Panc1 (cell line): ENCODE measurements at regions of chr2 and their contacts with region 1.

Region 1: GRCh38 chr2:102703748-102704147 is 58.1 kb upstream of the TMEM182 start:
- DNase-seq: peak; percentile 39
- ATAC-seq: peak; percentile 94
- H3K4me3 ChIP-seq: no peak overlapping the region
- H3K27ac ChIP-seq: no peak overlapping the region
- H3K4me1 ChIP-seq: peaks cover 3% of the 10 kb centered on the region
- H3K27me3 ChIP-seq: no peaks in the 10 kb centered on the region
- CTCF ChIP-seq: peak; percentile 65; the same call in 1 of the 2 replicates

Region 2: GRCh38 chr2:102473020-102473419 is 230.7 kb before region 1 on chr2 and contains the start of gene SLC9A4:
- CTCF ChIA-PET with region 1: interaction called, 4 read pairs
- POLR2A ChIA-PET with region 1: no interaction called
- in situ Hi-C with region 1: no loop called
- intact Hi-C with region 1: loop called (anchors 1 kb)
- DNase-seq: peak; percentile 41
- ATAC-seq: peak; percentile 70; the same call in 1 of the 2 replicates
- H3K4me3 ChIP-seq: no peak within 1 kb of the TSS
- H3K27ac ChIP-seq: no peak within 1 kb of the TSS
- H3K4me1 ChIP-seq: no peaks in the 10 kb centered on the region
- H3K27me3 ChIP-seq: peaks cover 4% of the 10 kb centered on the region
- CTCF ChIP-seq: peak; percentile 86
- total RNA-seq, gene SLC9A4: not detected

Region 3: GRCh38 chr2:102520028-102520427 is 183.7 kb before region 1 on chr2:
- CTCF ChIA-PET with region 1: no interaction called
- POLR2A ChIA-PET with region 1: no interaction called
- in situ Hi-C with region 1: no loop called
- intact Hi-C with region 1: loop called (anchors 5 kb)
- DNase-seq: no peak
- ATAC-seq: peak; percentile 70
- H3K4me3 ChIP-seq: no peak overlapping the region
- H3K27ac ChIP-seq: no peak overlapping the region
- H3K4me1 ChIP-seq: no peaks in the 10 kb centered on the region
- H3K27me3 ChIP-seq: no peaks in the 10 kb centered on the region
- CTCF ChIP-seq: peak; percentile 82